MCF 10A (cell line): ENCODE measurements at regions of chr6 and their contacts with region 1.

Region 1: DNA sequence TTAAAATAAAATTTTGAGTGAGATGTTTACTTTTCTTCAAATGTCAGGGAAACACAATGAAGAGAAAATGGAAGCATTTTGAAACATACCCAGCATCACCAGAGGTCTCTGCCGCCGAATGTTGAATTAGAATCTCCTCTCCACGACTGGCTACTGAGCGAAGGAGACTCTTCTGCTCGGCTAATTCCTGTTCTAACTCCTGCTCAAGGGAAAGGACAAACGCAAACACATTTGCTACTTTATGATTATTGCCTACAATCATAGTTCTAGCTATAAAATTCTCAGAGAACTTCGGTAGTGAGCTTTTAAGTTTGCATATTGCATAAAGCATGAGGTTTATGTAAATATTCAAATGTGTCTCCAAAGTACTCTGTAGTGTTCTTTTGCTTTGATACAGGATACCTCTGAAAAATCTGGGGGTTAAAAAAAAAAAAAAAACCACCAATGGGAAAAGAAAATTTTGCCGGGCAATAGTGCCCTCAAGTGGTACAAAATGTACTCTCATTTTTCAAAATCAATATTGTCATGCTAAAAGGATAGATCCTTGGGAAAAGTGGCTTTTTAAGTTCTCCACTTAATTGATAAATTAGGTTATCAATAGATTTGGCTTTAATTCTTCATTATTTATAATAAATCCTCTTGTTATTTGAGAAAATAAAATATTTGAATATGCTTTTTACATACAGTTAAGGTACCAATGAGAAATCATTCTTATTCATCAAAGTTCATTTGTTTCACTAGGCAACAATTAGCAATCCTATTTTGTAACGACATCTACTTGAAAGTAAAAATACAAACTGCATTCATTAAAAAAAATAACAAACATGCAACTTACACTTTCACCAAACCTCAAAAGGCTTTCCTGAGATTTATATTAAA is 369.0 kb downstream of the SYNE1 start:
- DNase-seq: peak; percentile 41
- H3K4me3 Mint-ChIP-seq: no peak overlapping the region
- H3K27ac Mint-ChIP-seq: no peak overlapping the region
- H3K4me1 Mint-ChIP-seq: peaks cover 20% of the 10 kb centered on the region
- H3K27me3 Mint-ChIP-seq: no peaks in the 10 kb centered on the region
- CTCF ChIP-seq: peak; percentile 45

Region 2: GRCh38 chr6:150685860-150686259 is 1582.3 kb before region 1 on chr6:
- CTCF ChIA-PET with region 1: no interaction called
- POLR2A ChIA-PET with region 1: no interaction called
- intact Hi-C with region 1: no loop called
- DNase-seq: peak; percentile 62
- H3K4me3 Mint-ChIP-seq: no peak overlapping the region
- H3K27ac Mint-ChIP-seq: no peak overlapping the region
- H3K4me1 Mint-ChIP-seq: no peaks in the 10 kb centered on the region
- H3K27me3 Mint-ChIP-seq: no peaks in the 10 kb centered on the region
- CTCF ChIP-seq: peak; percentile 61

Region 3: GRCh38 chr6:151330134-151330696 is 938.0 kb before region 1 on chr6:
- CTCF ChIA-PET with region 1: interaction called, 4 read pairs
- POLR2A ChIA-PET with region 1: no interaction called
- intact Hi-C with region 1: loop called (anchors 10 kb)
- DNase-seq: no peak
- H3K4me3 Mint-ChIP-seq: no peak overlapping the region
- H3K27ac Mint-ChIP-seq: no peak overlapping the region
- H3K4me1 Mint-ChIP-seq: peaks cover under 1% of the 10 kb centered on the region
- H3K27me3 Mint-ChIP-seq: no peaks in the 10 kb centered on the region
- CTCF ChIP-seq: no peak

Region 4: GRCh38 chr6:151675746-151676416 is 592.3 kb before region 1 on chr6:
- CTCF ChIA-PET with region 1: interaction called, 4 read pairs
- POLR2A ChIA-PET with region 1: no interaction called
- intact Hi-C with region 1: loop called (anchors 1 kb)
- DNase-seq: peak; percentile 71
- H3K4me3 Mint-ChIP-seq: no peak overlapping the region
- H3K27ac Mint-ChIP-seq: no peak overlapping the region
- H3K4me1 Mint-ChIP-seq: no peaks in the 10 kb centered on the region
- H3K27me3 Mint-ChIP-seq: no peaks in the 10 kb centered on the region
- CTCF ChIP-seq: peak; percentile 89

Region 5: DNA sequence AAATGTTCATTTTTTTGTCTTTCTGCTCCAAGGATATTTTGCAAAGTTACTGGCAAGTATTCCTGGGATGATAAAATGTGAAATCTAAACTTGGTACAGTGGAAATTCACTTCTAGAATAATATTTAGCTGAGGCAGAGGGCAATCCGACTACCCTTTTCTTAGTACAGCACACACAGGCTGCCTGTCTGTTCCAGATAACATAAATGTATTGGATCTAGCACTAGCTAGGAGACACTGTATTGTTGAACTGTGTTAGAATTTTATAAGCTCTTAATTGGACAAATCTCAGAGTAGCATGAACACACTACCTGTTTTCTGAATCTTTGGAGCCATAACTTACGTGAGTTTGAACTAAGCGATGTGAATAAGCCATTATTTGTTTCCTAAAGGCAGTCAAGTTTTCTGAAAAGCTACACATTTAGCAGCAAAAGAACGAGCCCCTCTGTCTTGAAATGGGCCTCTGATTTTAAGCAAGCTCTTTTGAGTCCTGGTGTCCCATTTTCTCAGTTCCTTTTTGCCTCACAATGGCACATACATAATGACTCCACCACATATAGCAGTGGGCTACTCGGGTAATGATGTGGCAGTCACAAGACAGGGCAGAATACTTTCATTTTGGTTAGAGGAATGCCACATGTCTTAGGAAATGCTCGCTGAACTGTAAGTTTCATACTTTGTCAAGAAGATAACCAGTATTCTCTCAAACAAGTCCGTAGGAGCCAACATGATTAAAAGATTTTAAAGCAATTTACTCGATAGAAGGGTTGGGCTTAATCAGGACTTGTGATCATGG is 577.2 kb before region 1 on chr6:
- CTCF ChIA-PET with region 1: interaction called, 3 read pairs
- POLR2A ChIA-PET with region 1: no interaction called
- intact Hi-C with region 1: loop called (anchors 5 kb)
- DNase-seq: no peak
- H3K4me3 Mint-ChIP-seq: no peak overlapping the region
- H3K27ac Mint-ChIP-seq: no peak overlapping the region
- H3K4me1 Mint-ChIP-seq: no peaks in the 10 kb centered on the region
- H3K27me3 Mint-ChIP-seq: no peaks in the 10 kb centered on the region
- CTCF ChIP-seq: no peak

Region 6: DNA sequence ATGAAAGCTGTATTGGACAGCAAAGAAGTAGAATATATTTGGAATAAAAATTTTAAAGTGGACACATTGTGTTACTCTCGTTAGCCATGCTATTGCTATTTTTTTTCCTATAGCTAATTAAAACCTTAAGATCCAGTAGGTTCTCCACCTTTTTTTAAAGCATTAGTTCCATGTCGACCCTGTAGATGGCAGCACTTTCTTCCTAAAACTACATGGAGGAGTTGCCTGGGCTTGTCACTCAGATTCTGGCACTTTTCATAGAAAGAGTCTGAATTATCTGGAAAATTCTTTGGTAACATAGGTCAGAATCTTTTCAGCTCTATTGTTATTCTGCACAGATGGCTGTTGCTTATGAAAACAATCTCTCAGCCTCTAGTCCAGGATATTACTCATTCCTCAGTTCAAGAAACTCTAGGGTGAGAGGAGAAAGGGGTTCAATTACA is 502.7 kb before region 1 on chr6:
- CTCF ChIA-PET with region 1: interaction called, 11 read pairs
- POLR2A ChIA-PET with region 1: interaction called, 4 read pairs
- intact Hi-C with region 1: loop called (anchors 1 kb)
- DNase-seq: peak; percentile 85
- H3K4me3 Mint-ChIP-seq: no peak overlapping the region
- H3K27ac Mint-ChIP-seq: peak overlapping the region; percentile 6
- H3K4me1 Mint-ChIP-seq: peaks cover 23% of the 10 kb centered on the region
- H3K27me3 Mint-ChIP-seq: no peaks in the 10 kb centered on the region
- CTCF ChIP-seq: peak; percentile 64

Region 7: DNA sequence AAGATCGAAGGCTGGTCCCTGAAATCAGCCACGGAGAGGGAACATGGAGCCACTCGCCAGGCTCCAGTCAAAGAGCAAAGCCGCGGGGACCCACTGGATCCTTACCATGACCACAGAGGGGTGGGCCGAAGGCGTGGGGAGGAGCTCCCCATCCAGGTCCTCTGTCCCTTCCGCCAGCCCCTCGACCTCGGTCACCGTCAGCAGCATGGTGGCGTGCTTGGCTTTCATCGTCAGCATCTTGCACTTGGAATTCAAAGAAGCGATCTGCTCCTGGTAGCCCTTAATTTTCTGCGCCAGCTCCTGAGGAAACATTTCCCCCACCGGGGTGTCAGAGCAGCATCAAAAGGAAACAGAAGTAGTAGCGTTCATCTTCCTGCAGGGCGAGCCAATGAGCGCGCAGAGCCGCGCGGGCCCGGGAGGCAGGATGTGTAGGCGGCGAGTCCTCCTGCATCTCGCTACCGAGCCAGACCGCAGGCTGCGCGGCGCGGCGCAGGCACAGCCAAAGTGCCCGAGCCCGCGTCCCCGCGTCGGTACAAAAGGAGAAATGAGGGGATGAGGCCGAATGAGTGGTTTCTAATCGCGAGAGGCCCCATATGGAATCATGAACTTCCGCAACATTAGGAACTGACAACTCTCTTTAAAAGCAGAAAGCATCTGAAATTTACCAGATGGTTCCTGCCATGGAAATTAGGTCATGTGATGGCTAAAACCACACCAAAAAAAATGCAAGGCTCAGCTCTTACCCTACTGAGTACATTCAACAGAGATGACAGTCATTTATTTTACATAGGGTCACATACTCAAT is 33.8 kb after region 1 on chr6:
- CTCF ChIA-PET with region 1: interaction called, 23 read pairs
- POLR2A ChIA-PET with region 1: interaction called, 40 read pairs
- intact Hi-C with region 1: no loop called
- DNase-seq: peak; percentile 88
- H3K4me3 Mint-ChIP-seq: peak overlapping the region; percentile 90
- H3K27ac Mint-ChIP-seq: peak overlapping the region; percentile 79
- H3K4me1 Mint-ChIP-seq: peaks cover 5% of the 10 kb centered on the region
- H3K27me3 Mint-ChIP-seq: no peaks in the 10 kb centered on the region
- CTCF ChIP-seq: peak; percentile 73

Region 8: GRCh38 chr6:152356451-152357061 is 88.3 kb after region 1 on chr6:
- CTCF ChIA-PET with region 1: no interaction called
- POLR2A ChIA-PET with region 1: no interaction called
- intact Hi-C with region 1: loop called (anchors 1 kb)
- DNase-seq: peak; percentile 48
- H3K4me3 Mint-ChIP-seq: no peak overlapping the region
- H3K27ac Mint-ChIP-seq: no peak overlapping the region
- H3K4me1 Mint-ChIP-seq: peaks cover 5% of the 10 kb centered on the region
- H3K27me3 Mint-ChIP-seq: no peaks in the 10 kb centered on the region
- CTCF ChIP-seq: peak; percentile 49